GM13976 (cell line): ENCODE measurements at regions of chr16 and their contacts with region 1.

Region 1: DNA sequence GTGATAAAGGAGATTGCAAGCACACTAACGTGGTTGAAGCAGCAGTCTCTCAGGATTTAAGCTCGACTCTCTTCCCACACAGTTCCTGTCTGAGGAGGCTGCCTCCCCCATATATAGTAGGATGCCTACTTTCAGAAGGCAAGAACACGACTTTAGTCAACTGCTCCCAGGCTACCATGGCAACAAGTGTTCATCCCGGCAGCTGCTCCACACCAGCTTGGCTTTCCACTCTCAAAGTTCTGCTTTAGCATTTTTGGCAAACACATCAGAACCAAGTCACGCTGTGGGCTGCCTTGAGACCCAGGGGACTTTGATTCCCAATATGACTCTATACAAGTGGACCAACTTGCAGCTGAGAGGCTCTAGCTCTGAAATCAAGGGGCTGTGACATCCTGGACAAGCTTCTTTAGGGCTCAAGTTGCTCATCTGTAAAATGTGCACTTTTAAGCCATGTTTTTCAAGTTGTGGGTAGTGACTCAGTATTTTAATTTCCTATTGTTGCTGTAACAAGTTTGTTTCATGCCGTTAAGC is 16.5 kb downstream of the ZP2 start:
- DNase-seq: peak; percentile 19
- CTCF ChIP-seq: no peak

Region 2: DNA sequence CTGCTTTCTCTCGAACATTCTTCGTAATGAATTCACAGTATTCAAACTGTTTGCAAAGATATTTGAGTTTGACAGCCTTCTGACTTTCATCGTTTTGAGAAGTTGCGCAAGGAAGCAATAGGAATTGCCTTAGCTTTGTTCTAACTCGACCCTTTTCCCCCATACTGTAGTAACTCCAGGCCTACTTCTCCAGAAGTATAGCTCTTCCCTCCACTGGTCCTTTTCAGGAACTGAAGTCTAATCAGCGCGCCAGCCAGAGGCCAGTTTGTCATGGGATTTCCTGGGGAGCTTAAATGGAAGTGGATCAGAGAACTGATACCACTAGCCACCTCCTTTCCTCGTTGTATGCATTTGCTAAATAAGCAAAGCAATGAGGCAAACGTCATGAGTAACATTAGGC is 1151.6 kb after region 1 on chr16:
- in situ Hi-C with region 1: loop called (anchors 25 kb)
- DNase-seq: no peak
- CTCF ChIP-seq: no peak